Ascending aorta (tissue), 2 donors: ENCODE measurements at regions of chr3 and their contacts with region 1.

Region 1: DNA sequence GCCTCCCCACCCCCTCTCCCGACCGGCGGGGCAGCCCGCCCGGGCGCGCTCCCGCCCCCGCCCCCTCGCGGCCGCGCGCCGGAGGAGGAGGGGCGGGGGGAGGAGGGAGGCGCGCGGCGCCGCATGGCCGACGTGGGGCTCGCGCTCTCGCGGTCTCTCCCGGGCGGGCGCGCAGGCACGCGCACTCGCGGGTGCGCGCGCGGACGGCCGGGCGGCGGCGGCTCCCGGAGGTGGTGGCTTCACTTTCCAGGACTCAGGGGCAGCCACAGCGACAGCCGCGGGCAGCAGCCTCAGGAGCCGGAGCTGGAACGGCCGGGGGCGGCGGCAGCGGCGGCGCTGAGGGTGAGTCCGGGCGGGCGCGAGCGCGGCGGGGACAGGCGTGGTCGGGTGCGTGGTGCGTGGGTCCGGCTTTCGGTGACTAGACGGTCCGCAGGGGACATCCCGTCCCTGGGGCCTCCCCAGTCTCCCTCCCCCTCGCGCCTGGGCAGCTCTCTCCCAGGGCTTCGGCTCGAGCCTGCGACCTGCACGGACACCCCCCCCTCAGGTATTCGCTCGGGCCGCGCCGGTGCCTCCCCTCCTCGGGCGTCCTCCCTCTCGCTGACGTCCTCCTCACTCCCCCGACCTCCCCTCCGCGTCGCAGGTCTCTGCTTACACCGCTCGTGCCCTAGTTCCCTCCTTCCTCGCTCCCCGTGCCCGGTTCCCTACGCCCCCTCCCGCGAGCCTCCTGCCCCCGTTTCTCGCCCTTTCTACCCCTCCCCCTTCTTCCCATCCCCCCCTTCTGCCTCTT is at the start of gene UBE2E2:
- DNase-seq: peak in 1 of 2 donors; percentile 85
- H3K4me3 ChIP-seq: peak within 1 kb of the TSS; percentile 90 to 99
- H3K27ac ChIP-seq: peak within 1 kb of the TSS; percentile 83 to 90
- H3K4me1 ChIP-seq: peaks cover 0 to 4% of the 10 kb centered on the region in 2 donors
- H3K27me3 ChIP-seq: no peaks in the 10 kb centered on the region
- CTCF ChIP-seq: no peak
- total RNA-seq, gene UBE2E2: 5.3 TPM

Region 2: GRCh38 chr3:22495791-22496190 is 707.3 kb before region 1 on chr3:
- intact Hi-C with region 1: no loop called
- DNase-seq: no peak
- H3K4me3 ChIP-seq: no peak overlapping the region
- H3K27ac ChIP-seq: no peak overlapping the region
- H3K4me1 ChIP-seq: no peaks in the 10 kb centered on the region
- H3K27me3 ChIP-seq: no peaks in the 10 kb centered on the region
- CTCF ChIP-seq: no peak

Region 3: DNA sequence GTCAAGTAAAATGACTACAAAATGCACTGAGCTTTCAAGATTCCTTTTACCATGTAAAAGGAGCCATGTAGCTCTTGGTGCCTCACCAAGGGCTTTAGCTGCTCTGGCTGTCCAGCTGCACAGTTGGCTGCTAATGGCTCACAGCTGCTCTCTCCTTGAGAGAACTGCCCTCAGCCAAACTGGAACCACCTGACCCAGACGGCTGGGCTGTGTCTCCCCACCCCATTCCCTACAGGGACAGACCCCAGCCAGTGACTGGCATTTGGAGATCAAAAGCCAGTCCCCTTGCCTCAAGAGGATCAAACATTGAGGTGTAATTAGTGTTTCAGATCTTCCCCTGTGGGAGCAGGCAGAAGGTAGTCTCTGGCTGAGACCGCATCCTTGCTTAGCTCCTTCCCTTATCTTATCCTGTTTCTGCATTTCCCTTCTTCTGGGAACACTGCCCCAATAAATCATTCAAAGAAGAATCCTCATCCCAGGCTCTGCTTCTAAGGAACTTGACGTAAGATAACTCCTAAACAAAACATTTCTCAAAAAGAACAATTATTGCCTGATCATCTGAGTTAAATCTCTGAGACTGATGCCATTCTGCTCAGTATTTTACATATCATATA is 28.6 kb before region 1 on chr3:
- intact Hi-C with region 1: no loop called
- DNase-seq: no peak
- H3K4me3 ChIP-seq: no peak overlapping the region
- H3K27ac ChIP-seq: no peak overlapping the region
- H3K4me1 ChIP-seq: no peaks in the 10 kb centered on the region
- H3K27me3 ChIP-seq: no peaks in the 10 kb centered on the region
- CTCF ChIP-seq: no peak

Region 4: DNA sequence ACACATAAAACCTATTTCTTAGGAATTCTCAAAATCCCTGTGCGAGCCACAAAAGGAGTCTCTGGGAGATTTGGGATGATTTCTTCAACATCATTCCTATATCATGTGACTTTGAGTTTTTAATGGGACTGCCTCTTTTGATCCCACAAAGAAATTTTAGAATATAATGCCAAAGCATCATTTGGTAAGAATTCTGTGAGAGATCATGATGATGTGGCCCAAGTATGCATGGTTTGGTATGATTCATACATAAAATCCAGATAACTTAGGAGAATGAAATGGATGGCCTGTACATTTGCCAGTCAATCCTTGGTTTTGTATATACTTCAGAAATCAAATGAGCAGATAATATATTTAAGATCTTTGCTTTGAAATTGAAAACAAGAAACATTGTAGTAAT is 61.3 kb after region 1 on chr3:
- intact Hi-C with region 1: loop called (anchors 5 kb)
- DNase-seq: no peak
- H3K4me3 ChIP-seq: no peak overlapping the region
- H3K27ac ChIP-seq: no peak overlapping the region
- H3K4me1 ChIP-seq: peaks cover 0 to 11% of the 10 kb centered on the region in 2 donors
- H3K27me3 ChIP-seq: no peaks in the 10 kb centered on the region
- CTCF ChIP-seq: no peak

Region 5: DNA sequence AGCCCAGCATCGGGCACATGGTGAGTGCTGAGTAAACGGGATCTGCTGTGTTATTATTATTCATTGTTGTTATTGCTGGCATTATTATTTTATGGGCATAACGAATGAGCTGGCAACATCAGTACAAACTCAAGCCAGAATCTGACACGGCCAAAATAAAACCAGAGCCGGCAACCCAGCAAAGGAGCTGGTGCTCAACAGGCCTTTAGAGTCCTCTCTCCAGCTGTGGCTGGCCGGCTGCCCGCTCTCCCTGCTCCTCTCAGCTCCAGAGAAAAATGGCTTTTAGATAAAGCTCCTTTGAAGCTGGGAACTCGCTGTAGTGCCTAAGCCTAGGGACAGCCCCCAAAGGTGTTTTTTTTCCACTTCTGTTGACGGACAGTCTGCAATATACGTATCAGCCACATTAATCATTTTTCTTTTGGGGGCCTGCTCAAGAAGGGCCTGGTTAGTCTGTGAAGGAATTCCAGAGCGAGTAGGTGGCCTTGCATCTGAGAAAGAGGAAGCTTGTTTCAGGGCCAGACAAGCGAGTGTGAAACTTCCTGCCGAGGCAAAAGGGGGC is 408.7 kb after region 1 on chr3:
- intact Hi-C with region 1: loop called (anchors 5 kb)
- DNase-seq: peak in 1 of 2 donors; percentile 78
- H3K4me3 ChIP-seq: peak overlapping the region; percentile 28 to 61
- H3K27ac ChIP-seq: peak overlapping the region; percentile 81 to 83
- H3K4me1 ChIP-seq: peaks cover 0 to 5% of the 10 kb centered on the region in 2 donors
- H3K27me3 ChIP-seq: no peaks in the 10 kb centered on the region
- CTCF ChIP-seq: no peak

Region 6: GRCh38 chr3:23805633-23806533 is 602.8 kb after region 1 on chr3 and contains the start of gene UBE2E1:
- intact Hi-C with region 1: loop called (anchors 5 kb)
- DNase-seq: peak in 1 of 2 donors; percentile 84
- H3K4me3 ChIP-seq: peak within 1 kb of the TSS; percentile 78 to 84
- H3K27ac ChIP-seq: peak within 1 kb of the TSS; percentile 63 to 66
- H3K4me1 ChIP-seq: peaks cover 0 to 15% of the 10 kb centered on the region in 2 donors
- H3K27me3 ChIP-seq: no peaks in the 10 kb centered on the region
- CTCF ChIP-seq: no peak
- total RNA-seq, gene UBE2E1: 74.6 TPM